Mucosa of descending colon (tissue), 3 donors: ENCODE measurements at regions of chr12 and their contacts with region 1.

Region 1: DNA sequence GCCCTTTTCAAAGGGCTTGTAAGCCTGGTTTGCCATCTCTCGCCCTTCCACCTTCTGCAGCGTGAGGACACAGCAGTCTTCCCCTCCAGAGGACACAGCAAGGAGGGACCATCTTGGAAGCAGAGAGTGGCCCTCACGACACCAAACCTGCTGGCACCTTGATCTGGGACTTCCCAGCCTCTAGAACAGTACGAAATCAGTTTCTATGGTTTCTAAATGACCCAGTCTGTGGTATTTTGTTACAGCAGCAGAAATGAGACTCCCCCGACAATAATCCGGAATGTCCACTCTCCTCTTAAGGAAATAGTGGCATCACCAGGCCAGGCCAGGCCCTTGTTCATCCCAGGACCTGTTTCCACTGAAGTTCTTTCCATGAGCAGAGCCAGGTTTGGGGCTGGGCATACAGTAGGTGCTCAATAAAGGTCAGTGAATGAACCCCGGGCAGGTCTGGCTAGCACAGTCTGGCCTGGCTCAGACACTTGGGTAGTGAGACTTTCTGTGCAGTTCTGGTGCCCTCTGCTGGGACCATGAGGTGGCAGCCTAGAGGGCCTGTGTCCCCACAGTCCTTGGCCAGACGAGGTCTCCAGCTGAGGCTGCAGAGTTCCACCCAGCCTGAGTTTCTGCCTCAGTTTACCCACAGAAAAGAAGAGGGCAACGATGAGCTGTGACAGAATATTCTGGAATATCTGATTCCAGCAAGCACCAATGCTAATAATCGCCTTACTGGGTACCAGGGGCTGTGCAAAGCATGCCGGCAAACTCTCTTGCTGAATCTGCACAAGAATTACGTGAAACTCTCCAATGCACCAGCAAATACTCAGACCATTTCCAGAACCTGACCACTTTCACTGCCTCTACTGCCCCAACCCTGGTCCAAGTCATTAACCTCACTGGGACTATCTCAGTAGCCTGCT is 14.0 kb downstream of the ABCB9 start:
- DNase-seq: peak; percentile 80 to 91 (median 87)
- ATAC-seq: peak; percentile 88
- H3K4me3 ChIP-seq: no peak overlapping the region
- H3K4me1 ChIP-seq: peaks cover 20% of the 10 kb centered on the region
- CTCF ChIP-seq: peak; percentile 77

Region 2: DNA sequence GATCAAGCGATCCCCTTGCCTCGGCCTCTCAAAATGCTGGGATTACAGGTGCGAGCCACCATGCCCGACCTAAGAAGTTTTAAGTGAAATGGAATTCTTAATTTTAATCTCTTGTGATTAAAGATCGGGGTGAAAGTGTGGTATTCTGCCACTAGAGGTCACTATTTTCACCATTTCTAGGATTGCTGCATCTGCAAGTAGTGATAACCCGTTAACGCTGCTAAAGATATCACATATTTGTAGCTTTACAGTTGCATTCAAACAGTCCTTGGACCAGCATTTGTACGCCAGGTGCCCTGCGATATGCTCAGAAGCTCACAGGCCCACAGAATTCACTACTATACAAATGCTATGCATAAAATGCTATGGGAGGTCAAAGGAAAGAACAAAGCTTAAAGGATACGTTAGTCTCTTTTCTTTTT is 158.5 kb before region 1 on chr12:
- intact Hi-C with region 1: loop called in 1 of 2 experiments (anchors 10 kb)
- DNase-seq: peak in 1 of 3 donors; percentile 30
- ATAC-seq: peak; percentile 79
- H3K4me3 ChIP-seq: no peak overlapping the region
- H3K4me1 ChIP-seq: no peaks in the 10 kb centered on the region
- CTCF ChIP-seq: peak; percentile 16

Region 3: DNA sequence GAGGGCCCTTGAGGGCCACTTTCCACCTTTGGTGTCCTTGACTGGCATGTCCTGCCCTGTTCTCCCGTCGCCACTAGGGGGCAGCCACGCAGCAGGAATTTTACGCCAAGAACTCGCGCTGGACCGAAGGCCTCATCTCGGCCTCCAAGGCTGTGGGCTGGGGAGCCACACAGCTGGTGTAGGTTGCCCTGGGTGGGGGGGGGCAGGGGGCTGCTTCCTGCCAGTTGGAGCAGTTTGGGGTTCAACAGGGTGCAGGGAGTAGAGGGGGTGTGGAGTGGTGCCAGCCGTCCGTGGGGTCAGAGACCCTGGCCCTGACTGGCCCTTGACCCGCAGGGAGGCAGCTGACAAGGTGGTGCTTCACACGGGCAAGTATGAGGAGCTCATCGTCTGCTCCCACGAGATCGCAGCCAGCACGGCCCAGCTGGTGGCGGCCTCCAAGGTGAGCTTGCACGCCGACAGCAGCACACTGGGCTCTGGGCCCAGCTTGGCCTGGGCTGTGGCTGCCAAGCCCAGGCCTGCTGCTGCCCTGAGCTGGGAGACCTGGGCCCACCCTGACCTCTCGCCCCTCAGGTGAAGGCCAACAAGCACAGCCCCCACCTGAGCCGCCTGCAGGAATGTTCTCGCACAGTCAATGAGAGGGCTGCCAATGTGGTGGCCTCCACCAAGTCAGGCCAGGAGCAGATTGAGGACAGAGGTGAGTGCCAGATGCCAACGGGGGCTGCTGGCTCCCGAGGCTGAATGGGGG is 91.7 kb before region 1 on chr12:
- intact Hi-C with region 1: loop called (anchors 2 to 5 kb)
- DNase-seq: peak; percentile 89 to 93 (median 90)
- ATAC-seq: peak; percentile 66
- H3K4me3 ChIP-seq: no peak overlapping the region
- H3K4me1 ChIP-seq: peaks cover 18% of the 10 kb centered on the region
- CTCF ChIP-seq: peak; percentile 72

Region 4: DNA sequence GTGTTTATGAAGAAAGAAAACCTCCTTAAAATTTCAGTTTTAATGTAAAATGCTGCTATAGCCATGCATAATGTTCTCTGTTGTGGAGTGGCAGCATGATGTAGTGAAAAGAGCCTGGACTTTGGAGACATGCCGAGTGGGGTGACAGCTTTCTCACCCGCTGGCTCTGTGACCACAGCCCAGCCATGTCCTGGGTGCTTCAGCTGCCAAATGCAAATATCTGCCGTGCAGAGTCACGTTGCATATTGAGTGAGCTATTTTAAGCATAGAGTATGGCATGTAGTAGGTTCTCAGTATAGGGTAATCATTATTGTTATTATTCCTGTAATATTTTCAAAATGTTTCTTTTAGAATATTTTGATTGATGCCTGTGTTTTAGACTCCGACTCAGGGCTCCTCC is 703.2 kb after region 1 on chr12:
- intact Hi-C with region 1: no loop called
- DNase-seq: peak in 1 of 3 donors; percentile 4
- ATAC-seq: peak; percentile 33
- H3K4me3 ChIP-seq: no peak overlapping the region
- H3K4me1 ChIP-seq: no peaks in the 10 kb centered on the region
- CTCF ChIP-seq: no peak